A673 (cell line): ENCODE measurements at regions of chr16 and their contacts with region 1.

Region 1: DNA sequence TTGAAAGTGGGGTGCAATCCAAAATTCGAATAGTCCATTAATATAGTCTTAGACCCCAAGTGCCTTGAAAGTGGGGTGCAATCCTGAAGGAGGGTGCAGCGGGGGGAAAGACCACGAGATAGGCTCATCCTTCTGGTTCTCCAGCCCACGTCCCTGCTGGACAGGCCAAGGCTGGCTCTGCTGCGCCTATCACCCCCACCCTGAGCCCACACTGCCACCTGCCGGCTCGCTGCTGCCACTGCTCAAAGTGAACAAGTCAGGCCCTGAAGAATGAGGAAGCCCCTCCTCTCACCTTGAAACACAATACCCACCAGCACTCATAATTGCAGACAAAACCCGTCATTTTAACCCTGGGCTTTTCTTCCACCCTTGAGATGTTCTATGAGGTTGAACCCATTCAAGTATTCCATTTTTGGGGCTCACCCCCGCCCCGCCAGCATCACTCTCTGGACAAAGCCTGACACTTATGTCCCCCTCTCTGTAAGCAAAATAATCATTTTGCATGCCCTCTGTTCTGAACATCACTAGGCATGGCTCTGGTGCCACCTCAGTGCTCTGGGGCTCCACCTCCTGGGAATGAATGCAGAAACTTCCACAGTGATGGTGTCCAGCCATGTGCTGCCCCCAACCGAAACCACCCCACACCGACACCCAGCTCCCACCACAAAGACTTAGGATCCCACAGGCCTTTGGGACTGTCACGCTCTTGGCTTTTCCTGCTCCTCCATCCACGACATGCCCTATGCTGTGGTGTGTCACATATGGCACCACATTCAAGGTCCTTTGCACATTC is 56.8 kb downstream of the BEAN1 start:
- DNase-seq: peak; percentile 81
- H3K4me3 ChIP-seq: no peak overlapping the region
- H3K27ac ChIP-seq: no peak overlapping the region
- H3K4me1 ChIP-seq: no peaks in the 10 kb centered on the region
- H3K27me3 ChIP-seq: no peaks in the 10 kb centered on the region
- CTCF ChIP-seq: peak; percentile 98

Region 2: GRCh38 chr16:66275775-66276428 is 208.0 kb before region 1 on chr16:
- CTCF ChIA-PET with region 1: no interaction called
- POLR2A ChIA-PET with region 1: no interaction called
- intact Hi-C with region 1: loop called (anchors 1 kb)
- DNase-seq: peak; percentile 83
- H3K4me3 ChIP-seq: no peak overlapping the region
- H3K27ac ChIP-seq: no peak overlapping the region
- H3K4me1 ChIP-seq: peaks cover 12% of the 10 kb centered on the region
- H3K27me3 ChIP-seq: no peaks in the 10 kb centered on the region
- CTCF ChIP-seq: peak; percentile 80

Region 3: DNA sequence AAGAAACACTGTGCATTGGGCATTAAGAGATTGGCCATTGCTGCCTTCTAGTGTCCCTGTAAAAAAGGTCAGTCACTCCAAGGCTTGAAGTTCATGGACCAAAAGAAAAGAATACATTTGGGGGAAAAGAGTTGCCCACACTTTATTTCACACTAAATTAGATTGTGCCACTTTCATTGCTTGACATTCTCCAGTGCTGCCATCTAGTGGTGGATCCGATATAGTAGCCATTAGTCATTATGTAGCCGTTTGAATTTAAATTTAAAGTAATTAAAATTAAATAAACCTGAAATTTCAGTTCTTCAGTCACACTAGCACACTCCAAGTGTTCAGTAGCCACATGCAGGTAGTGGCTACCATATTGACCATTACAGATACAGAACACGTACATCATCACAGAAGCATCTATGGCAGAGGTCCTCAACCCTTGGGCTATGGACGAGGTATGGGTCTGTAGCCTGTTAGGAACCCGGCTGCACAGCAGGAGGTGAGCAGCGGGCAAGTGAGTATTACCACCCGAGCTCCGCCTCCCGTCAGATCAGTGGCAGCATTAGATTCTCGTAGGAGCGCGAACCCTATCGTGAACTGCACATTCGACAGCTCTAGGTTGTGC is 139.2 kb before region 1 on chr16:
- CTCF ChIA-PET with region 1: interaction called, 5 read pairs
- POLR2A ChIA-PET with region 1: no interaction called
- intact Hi-C with region 1: loop called (anchors 1 kb)
- DNase-seq: peak; percentile 58
- H3K4me3 ChIP-seq: no peak overlapping the region
- H3K27ac ChIP-seq: no peak overlapping the region
- H3K4me1 ChIP-seq: no peaks in the 10 kb centered on the region
- H3K27me3 ChIP-seq: no peaks in the 10 kb centered on the region
- CTCF ChIP-seq: peak; percentile 90

Region 4: DNA sequence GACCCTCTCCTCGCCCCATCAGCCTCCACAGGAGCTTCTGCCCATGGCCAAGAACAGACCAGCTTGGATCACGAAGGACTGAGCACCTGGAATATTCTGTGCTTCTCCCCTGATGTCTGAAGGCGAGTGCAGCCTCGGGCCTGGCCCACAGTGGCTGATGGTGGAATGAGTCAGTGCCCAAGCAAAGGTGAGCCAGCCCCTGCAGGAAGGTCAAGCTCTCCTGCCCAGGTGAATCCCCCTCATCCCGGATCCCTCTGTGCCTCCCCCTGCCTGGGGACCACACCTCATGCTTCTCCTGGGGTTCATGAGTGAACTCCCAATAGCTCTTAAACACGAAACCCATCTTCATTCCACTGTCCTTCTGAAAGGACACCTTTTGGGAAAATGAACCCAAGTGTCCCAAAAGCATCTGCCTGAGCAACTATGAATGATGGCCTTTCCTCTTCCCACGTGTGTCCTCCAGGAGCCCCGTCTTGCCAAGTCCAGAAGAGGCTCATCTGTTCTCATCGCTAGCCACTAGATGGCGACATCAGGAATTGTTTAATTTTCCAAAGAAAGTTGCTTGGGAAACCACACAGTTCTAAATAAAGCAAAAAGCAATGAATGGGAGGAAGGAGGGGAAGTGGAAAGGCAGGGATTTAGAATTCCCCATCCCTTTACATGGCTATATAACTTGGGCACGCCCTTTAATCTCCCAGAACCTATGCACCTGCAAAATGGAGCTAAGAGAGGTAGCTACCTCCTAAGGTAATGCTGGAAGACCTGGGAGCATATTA is 126.5 kb before region 1 on chr16:
- CTCF ChIA-PET with region 1: no interaction called
- POLR2A ChIA-PET with region 1: no interaction called
- intact Hi-C with region 1: loop called (anchors 2 kb)
- DNase-seq: peak; percentile 87
- H3K4me3 ChIP-seq: no peak overlapping the region
- H3K27ac ChIP-seq: no peak overlapping the region
- H3K4me1 ChIP-seq: no peaks in the 10 kb centered on the region
- H3K27me3 ChIP-seq: no peaks in the 10 kb centered on the region
- CTCF ChIP-seq: peak; percentile 87

Region 5: DNA sequence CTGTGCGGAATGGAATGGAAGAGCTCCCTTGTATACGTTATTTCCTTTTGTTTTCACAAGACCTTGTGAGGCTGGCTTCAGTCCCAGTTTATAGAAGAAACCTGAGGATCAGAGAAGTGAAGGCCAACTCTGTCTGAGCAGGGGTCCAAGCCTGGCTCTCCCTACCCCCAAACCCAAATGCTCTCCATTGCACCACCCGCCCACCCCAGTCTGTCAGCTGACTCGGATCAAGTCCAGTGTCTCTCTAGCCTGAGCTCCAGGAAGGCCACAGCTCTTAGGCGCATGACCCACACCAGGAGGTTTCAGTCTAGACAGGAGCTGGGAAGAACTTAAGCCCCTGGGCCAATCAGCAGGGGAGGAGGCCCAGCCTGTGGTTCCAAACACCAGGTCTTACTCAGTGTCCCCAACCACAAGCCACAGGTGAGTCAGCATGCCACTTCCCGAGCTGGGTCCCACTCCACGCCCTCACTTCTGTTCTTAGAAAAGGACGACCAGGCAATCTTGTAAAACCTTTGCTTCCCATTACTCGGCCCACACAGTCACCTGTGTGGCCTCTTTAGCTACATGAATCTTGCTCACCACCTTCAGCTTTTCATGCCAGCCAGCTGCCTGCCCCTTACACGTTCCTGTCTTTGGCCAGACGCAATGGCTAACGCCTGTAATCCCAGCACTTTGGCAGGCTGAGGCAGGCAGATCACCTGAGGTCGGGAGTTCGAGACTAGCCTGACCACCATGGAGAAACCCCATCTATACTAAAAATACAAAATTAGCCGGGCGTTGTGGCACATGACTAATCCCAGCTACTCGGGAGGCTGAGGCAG is 38.3 kb after region 1 on chr16:
- CTCF ChIA-PET with region 1: no interaction called
- POLR2A ChIA-PET with region 1: no interaction called
- intact Hi-C with region 1: no loop called
- DNase-seq: no peak
- H3K4me3 ChIP-seq: no peak overlapping the region
- H3K27ac ChIP-seq: no peak overlapping the region
- H3K4me1 ChIP-seq: peaks cover 2% of the 10 kb centered on the region
- H3K27me3 ChIP-seq: no peaks in the 10 kb centered on the region
- CTCF ChIP-seq: no peak

Region 6: DNA sequence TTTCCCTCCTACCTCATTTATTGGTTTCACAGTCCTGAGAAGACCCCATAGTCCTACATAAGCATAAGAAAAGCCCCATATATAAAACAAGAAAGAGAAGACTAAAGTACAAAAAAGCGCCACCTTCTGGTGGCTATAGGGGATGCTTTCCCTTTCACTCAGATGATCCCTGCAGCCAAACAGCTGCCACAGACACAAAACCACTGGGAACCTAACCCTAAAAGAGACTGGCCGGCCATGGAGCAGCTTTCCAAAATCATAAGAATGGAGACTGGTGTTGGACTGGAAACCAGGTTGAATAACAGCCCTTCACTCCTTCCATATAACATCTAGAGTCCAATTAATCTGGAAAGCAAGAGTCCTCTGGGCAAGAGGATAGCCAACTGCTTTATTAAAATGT is 256.1 kb after region 1 on chr16:
- CTCF ChIA-PET with region 1: interaction called, 12 read pairs
- POLR2A ChIA-PET with region 1: no interaction called
- intact Hi-C with region 1: no loop called
- DNase-seq: peak; percentile 68
- H3K4me3 ChIP-seq: no peak overlapping the region
- H3K27ac ChIP-seq: peak overlapping the region; percentile 25
- H3K4me1 ChIP-seq: peaks cover 14% of the 10 kb centered on the region
- H3K27me3 ChIP-seq: no peaks in the 10 kb centered on the region
- CTCF ChIP-seq: peak; percentile 88